ENCODE measurements at regions of chr15 and their contacts with region 1.

Region 1: GRCh38 chr15:85667491-85668424 is 127.0 kb downstream of the KLHL25 start:
- DNase-seq: peak; percentile 73
- ATAC-seq: peak; percentile 94
- H3K4me3 Mint-ChIP-seq: peak overlapping the region; percentile 47
- H3K27ac Mint-ChIP-seq: peak overlapping the region; percentile 94
- H3K4me1 Mint-ChIP-seq: peaks cover 35% of the 10 kb centered on the region
- H3K27me3 Mint-ChIP-seq: no peaks in the 10 kb centered on the region

Region 2: GRCh38 chr15:85625856-85626255 is 41.9 kb before region 1 on chr15:
- CTCF ChIA-PET with region 1: interaction called, 3 read pairs
- POLR2A ChIA-PET with region 1: no interaction called
- intact Hi-C with region 1: loop called (anchors 2 to 5 kb)
- DNase-seq: peak; percentile 48
- ATAC-seq: peak; percentile 84
- H3K4me3 Mint-ChIP-seq: peak overlapping the region; percentile 22
- H3K27ac Mint-ChIP-seq: peak overlapping the region; percentile 90
- H3K4me1 Mint-ChIP-seq: peaks cover 69% of the 10 kb centered on the region
- H3K27me3 Mint-ChIP-seq: no peaks in the 10 kb centered on the region

Region 3: DNA sequence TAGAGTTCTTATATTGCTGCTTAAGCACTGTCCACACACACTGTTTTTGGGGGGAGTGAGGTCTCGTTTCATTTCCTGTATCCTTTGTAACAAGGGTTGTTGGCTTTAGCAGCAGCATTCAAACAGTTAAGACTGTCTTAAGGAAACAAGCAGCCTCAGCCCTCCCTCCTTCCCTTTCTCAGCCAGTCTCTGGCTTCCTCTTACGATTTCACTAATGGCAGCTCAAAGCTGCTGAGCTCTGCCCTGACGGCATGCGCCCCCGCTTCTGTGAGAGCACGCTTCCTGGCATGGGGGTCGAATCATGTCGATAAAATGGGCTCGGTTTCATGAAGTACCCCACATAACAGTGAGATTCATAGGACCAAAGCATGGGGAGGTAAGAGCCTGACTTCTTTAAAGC is 22.0 kb after region 1 on chr15:
- CTCF ChIA-PET with region 1: interaction called, 3 read pairs
- POLR2A ChIA-PET with region 1: interaction called, 5 read pairs
- intact Hi-C with region 1: loop called (anchors 1 kb)
- DNase-seq: peak; percentile 75
- ATAC-seq: peak; percentile 52
- H3K4me3 Mint-ChIP-seq: peak overlapping the region; percentile 78
- H3K27ac Mint-ChIP-seq: peak overlapping the region; percentile 98
- H3K4me1 Mint-ChIP-seq: peaks cover 77% of the 10 kb centered on the region
- H3K27me3 Mint-ChIP-seq: no peaks in the 10 kb centered on the region

Region 4: GRCh38 chr15:85707519-85708338 is 40.0 kb after region 1 on chr15:
- CTCF ChIA-PET with region 1: interaction called, 4 read pairs
- POLR2A ChIA-PET with region 1: interaction called, 6 read pairs
- intact Hi-C with region 1: loop called (anchors 1 kb)
- DNase-seq: peak; percentile 47
- ATAC-seq: peak; percentile 13
- H3K4me3 Mint-ChIP-seq: peak overlapping the region; percentile 68
- H3K27ac Mint-ChIP-seq: peak overlapping the region; percentile 96
- H3K4me1 Mint-ChIP-seq: peaks cover 90% of the 10 kb centered on the region
- H3K27me3 Mint-ChIP-seq: no peaks in the 10 kb centered on the region

Measured in activated CD4-positive, alpha-beta T cell treated with anti-CD3 and anti-CD28 coated beads for 36 hours (primary cell).